Activated T-helper 1 cell treated with anti-CD3 and anti-CD28 coated beads, Interleukin-12 subunit alpha, Interleukin-12 subunit beta, Interleukin-2, Interleukin-4 antibody, amounts not matched to agents 30 ng/mL and 10 ng/mL and 1 ng/mL, durations not matched to agents 14 hours and 24 hours and 36 hours (primary cell): ENCODE measurements at regions of chr17 and their contacts with region 1.

Region 1: DNA sequence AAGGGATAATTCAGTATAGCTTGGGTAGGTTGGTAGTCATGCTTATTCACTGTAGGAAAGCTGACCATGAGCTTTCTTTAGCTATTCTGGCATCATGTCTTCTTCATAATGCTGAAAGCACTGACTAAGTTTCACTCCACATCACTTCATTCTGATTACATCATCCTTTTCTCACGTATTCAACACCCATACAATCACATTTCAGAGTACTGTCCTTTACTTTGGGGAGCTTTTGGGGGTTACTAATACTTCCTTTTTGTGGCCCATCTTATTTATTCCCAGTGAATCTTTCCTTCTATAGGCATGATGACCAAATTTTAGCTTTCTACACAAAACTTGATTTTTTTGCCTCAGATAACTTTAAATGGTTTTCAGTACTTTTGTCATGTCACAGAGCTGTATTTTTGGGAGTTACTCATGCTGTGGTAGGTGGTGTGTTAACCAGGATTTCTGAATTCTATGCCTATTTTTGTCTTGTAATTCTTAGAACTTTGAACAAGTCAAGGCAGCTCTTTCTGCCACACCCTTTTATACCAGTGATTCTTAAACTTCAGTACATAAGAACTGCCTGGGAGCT is 23.5 kb downstream of the TADA2A start:
- DNase-seq: no peak
- H3K4me3 Mint-ChIP-seq: peak overlapping the region; percentile 19
- H3K27ac Mint-ChIP-seq: peak overlapping the region; percentile 95
- H3K4me1 Mint-ChIP-seq: peaks cover 37% of the 10 kb centered on the region
- H3K27me3 Mint-ChIP-seq: no peaks in the 10 kb centered on the region

Region 2: GRCh38 chr17:37570527-37571093 is 140.5 kb after region 1 on chr17:
- intact Hi-C with region 1: loop called (anchors 1 kb)
- DNase-seq: no peak
- H3K4me3 Mint-ChIP-seq: no peak overlapping the region
- H3K27ac Mint-ChIP-seq: no peak overlapping the region
- H3K4me1 Mint-ChIP-seq: no peaks in the 10 kb centered on the region
- H3K27me3 Mint-ChIP-seq: no peaks in the 10 kb centered on the region